Activated CD4-positive, alpha-beta T cell treated with anti-CD3 and anti-CD28 coated beads, Interleukin-2, amount 10 ng/mL, durations not matched to agents 7 days and 5 days (primary cell): ENCODE measurements at regions of chr12 and their contacts with region 1.

Region 1: DNA sequence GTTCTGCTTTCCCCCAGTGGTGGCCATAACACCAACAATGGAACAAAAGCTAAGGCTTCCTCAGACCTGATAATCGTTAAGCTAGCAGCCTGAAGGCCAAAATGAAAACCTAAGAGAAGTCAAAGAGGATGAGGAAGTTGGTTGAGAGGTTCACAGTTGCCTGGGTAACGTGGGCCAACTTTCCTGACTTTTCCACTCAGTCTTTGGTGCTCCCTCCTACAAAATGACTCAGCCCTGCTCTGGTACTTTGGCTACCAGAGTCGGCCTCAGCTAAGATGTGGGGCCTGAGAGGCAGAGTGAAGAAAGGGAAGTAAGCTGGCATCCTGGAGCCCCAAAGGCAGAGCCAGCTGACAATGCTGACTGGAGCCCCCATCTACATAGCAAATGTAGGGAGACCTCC is 14.9 kb upstream of the FKBP11 start:
- DNase-seq: no peak
- H3K4me3 Mint-ChIP-seq: no peak overlapping the region
- H3K27ac Mint-ChIP-seq: no peak overlapping the region
- H3K4me1 Mint-ChIP-seq: peaks cover 2% of the 10 kb centered on the region
- H3K27me3 Mint-ChIP-seq: no peaks in the 10 kb centered on the region

Region 2: GRCh38 chr12:48489012-48489411 is 451.2 kb before region 1 on chr12:
- CTCF ChIA-PET with region 1: no interaction called
- POLR2A ChIA-PET with region 1: no interaction called
- DNase-seq: no peak
- H3K4me3 Mint-ChIP-seq: no peak overlapping the region
- H3K27ac Mint-ChIP-seq: no peak overlapping the region
- H3K4me1 Mint-ChIP-seq: no peaks in the 10 kb centered on the region
- H3K27me3 Mint-ChIP-seq: peaks cover 4% of the 10 kb centered on the region

Region 3: GRCh38 chr12:48957141-48958048 is 17.2 kb after region 1 on chr12 and contains the start of gene ARF3:
- CTCF ChIA-PET with region 1: interaction called, 10 read pairs
- POLR2A ChIA-PET with region 1: no interaction called
- DNase-seq: peak; percentile 95
- H3K4me3 Mint-ChIP-seq: peak within 1 kb of the TSS; percentile 98
- H3K27ac Mint-ChIP-seq: peak within 1 kb of the TSS; percentile 90
- H3K4me1 Mint-ChIP-seq: peaks cover 29% of the 10 kb centered on the region
- H3K27me3 Mint-ChIP-seq: peaks cover 18% of the 10 kb centered on the region
- total RNA-seq, gene ARF3: 89.6 to 114 TPM